ENCODE measurements at regions of chr9 and their contacts with region 1.

Region 1: DNA sequence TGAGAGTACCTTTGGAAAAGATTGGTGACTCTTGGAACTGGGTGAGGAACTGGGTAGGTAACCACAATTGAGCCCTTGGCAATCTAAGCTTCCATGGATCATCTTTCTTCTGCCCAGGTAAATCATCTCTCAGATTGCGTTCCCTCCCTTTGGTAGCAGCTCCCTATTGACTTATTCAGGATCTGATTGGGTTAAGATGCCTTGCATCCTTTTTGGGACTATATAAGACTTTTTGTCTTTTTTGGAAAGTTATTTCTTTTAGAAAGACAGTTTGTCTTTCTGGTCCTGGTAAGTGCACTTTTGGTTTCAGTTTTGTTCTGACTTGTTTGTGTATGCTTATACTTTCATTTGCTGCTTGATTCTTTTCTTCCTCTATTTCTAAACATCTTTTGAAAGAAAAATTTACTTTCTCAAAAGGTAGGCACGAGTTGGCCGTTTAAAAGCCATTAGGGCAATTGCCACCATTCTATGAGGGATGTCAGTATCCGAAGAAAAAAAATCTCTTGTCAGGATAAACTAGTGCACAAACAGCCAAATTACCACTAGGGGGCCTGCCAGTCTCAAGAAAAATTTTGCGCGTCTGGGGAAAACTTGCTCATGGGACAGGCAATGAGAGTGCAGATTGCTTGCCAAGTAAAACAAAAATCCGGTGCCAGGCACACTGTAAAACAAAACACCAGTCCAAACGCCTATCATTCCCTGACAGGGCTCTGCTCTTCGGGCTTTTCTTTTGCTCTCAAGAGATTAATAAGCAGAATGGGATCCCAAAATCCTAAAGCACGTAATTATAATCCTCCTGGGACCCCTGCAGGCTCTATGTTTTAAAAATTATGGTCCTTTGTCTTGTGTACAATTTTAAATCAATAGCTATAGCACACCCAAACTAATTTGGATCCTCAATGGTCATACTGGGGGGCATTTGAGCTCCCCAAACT is 12.8 kb downstream of the OR1J1 start:
- DNase-seq: peak; percentile 80
- H3K4me3 ChIP-seq: peak overlapping the region; percentile 23 to 69 (median 38)
- H3K27ac ChIP-seq: peak overlapping the region in 7 of 8 donors; percentile 61 to 81 (median 75)
- H3K4me1 ChIP-seq: peaks cover 0 to 17% (median 12%) of the 10 kb centered on the region in 6 donors
- H3K27me3 ChIP-seq: peaks cover 0 to 12% (median 4%) of the 10 kb centered on the region in 7 donors
- CTCF ChIP-seq: peak; percentile 64 to 92 (median 84)
- POLR2A ChIP-seq: no peak

Region 2: GRCh38 chr9:121819428-121820231 is 645.3 kb before region 1 on chr9:
- intact Hi-C with region 1: no loop called
- DNase-seq: no peak
- H3K4me3 ChIP-seq: peak overlapping the region in 1 of 8 donors; percentile 33
- H3K27ac ChIP-seq: no peak overlapping the region
- H3K4me1 ChIP-seq: peaks cover 0 to 23% (median 4%) of the 10 kb centered on the region in 6 donors
- H3K27me3 ChIP-seq: no peaks in the 10 kb centered on the region
- CTCF ChIP-seq: no peak
- POLR2A ChIP-seq: no peak

Region 3: DNA sequence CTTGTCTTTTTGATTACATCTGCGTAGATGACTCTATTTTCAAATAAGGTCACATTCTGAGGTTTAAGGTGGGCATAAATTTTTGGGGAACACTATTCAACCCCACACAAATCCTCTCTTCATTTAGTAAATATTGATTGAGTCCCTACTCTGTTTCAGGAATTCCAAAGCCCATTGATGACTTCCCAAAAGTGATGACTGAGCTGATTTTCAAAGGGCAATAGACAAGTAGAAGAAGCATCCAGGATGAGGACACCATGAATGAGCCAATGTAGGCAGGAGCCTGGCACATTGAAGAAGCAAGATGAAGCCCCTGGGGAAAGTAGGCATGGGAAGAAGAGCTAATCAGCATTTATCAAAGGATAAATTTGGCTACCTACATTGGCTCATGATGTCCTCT is 22.3 kb before region 1 on chr9:
- intact Hi-C with region 1: no loop called
- DNase-seq: no peak
- H3K4me3 ChIP-seq: no peak overlapping the region
- H3K27ac ChIP-seq: no peak overlapping the region
- H3K4me1 ChIP-seq: no peaks in the 10 kb centered on the region
- H3K27me3 ChIP-seq: peaks cover 0 to 11% (median 0%) of the 10 kb centered on the region in 7 donors
- CTCF ChIP-seq: no peak
- POLR2A ChIP-seq: no peak

Region 4: DNA sequence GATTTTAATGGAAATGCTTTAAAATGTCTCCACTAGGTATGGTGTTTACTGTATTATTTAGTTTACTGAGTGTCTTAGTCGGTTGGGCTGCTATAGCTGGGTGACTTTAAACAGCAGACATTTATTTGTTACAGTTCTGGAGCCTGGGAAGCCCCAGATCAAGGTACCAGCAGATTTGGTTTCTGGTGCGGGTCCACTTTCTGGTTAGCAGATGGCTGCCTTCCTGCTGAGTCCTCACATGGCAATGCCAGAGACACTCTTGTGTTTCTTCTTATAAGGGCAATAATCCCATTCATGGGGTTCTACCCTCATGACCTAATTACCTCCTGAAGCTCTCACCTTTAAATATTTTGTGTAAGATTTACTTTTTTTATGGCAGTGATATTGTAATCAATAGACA is 53.3 kb after region 1 on chr9:
- intact Hi-C with region 1: no loop called
- DNase-seq: no peak
- H3K4me3 ChIP-seq: no peak overlapping the region
- H3K27ac ChIP-seq: no peak overlapping the region
- H3K4me1 ChIP-seq: no peaks in the 10 kb centered on the region
- H3K27me3 ChIP-seq: peaks cover 0 to 9% (median 0%) of the 10 kb centered on the region in 7 donors
- CTCF ChIP-seq: no peak
- POLR2A ChIP-seq: no peak

Region 5: GRCh38 chr9:122810306-122810946 is 345.5 kb after region 1 on chr9:
- intact Hi-C with region 1: loop called (anchors 5 kb)
- DNase-seq: peak; percentile 88
- H3K4me3 ChIP-seq: no peak overlapping the region
- H3K27ac ChIP-seq: no peak overlapping the region
- H3K4me1 ChIP-seq: peaks cover 0 to 21% (median 5%) of the 10 kb centered on the region in 6 donors
- H3K27me3 ChIP-seq: no peaks in the 10 kb centered on the region
- CTCF ChIP-seq: peak; percentile 80 to 91 (median 85)
- POLR2A ChIP-seq: no peak

Region 6: DNA sequence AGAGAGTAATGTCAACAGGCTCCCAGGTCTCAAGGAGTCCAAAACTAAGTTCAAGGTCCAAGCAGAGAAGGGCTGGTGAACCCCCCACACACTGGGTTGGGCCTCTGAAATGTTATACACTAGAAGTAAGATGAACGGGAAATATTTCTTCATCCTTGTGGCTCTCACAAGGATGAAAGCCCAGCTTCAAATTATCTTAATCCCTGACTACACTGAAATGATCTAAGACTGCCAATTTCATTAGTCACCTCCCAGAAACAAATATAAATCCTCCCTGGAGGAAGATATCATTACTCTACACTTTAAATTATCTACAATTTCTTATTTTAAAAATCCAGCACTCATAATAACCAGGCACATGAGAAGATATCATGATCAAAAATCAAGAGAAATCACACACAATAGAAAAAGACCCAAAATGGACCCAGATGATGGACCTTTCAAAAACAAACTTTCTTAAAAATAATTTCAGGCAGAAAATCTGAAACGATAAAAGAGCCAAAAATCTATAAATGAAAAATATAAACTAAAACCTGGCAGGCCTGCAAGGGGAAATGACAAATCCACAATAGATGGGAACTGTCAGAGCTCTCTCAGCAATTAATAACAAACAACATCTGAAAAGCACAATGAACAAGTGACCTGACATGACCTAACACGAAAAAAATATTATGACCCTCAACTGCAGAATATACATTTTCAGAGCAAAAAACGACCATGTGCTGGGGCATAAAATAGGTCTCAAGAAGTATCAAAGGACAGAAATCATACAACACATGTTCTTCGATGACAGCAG is 686.0 kb after region 1 on chr9:
- intact Hi-C with region 1: no loop called
- DNase-seq: no peak
- H3K4me3 ChIP-seq: no peak overlapping the region
- H3K27ac ChIP-seq: no peak overlapping the region
- H3K4me1 ChIP-seq: no peaks in the 10 kb centered on the region
- H3K27me3 ChIP-seq: no peaks in the 10 kb centered on the region
- CTCF ChIP-seq: no peak
- POLR2A ChIP-seq: no peak

Measured in spleen (tissue), 13 donors.